Ascending aorta (tissue), 2 donors: ENCODE measurements at regions of chr7 and their contacts with region 1.

Region 1: DNA sequence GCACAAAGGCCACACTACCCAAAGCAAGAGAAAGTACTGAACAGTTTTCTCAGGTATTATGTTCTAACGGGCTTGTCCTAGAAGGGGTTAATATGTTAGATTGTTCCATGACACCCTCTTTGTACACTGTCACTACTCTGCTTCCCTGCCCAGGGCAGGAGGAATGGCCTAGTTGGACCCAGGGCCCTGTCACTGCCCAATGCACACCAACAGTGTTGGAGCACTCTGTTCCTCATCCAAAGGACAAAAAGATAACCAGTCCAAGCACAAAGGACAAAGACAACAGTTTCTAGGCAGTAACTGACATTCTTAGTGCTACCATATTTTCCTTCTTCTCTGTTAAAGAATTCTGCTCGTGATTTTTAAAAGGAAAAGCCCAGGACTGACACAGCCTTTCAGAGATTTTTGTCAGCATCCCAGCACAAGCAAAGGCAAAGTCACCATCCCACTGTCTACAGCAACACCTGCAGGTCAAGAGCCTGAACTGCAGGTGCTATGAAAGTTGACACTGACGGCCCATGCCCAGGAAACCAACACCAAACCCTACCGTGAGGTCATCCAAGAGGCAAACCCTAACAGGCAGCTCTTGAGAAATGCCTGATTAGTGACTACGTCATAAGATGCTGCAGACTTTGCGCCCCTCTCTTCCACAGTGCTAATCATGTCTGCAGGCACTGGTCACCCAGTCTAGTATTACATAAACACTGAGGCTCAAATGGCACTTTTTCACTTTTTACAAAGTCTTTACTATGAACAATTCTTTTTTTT is 13.2 kb downstream of the NUDCD3 start:
- DNase-seq: peak; percentile 17 to 83
- H3K4me3 ChIP-seq: no peak overlapping the region
- H3K27ac ChIP-seq: peak overlapping the region; percentile 31 to 40
- H3K4me1 ChIP-seq: peaks cover 0 to 8% of the 10 kb centered on the region in 2 donors
- H3K27me3 ChIP-seq: no peaks in the 10 kb centered on the region
- CTCF ChIP-seq: peak; percentile 92 to 94 (median 94)

Region 2: GRCh38 chr7:44348300-44348699 is 128.9 kb before region 1 on chr7:
- intact Hi-C with region 1: loop called (anchors 2 kb)
- DNase-seq: no peak
- H3K4me3 ChIP-seq: no peak overlapping the region
- H3K27ac ChIP-seq: no peak overlapping the region
- H3K4me1 ChIP-seq: no peaks in the 10 kb centered on the region
- H3K27me3 ChIP-seq: no peaks in the 10 kb centered on the region
- CTCF ChIP-seq: peak in 2 of 3 experiments; percentile 14 to 43

Region 3: GRCh38 chr7:44383566-44383965 is 93.7 kb before region 1 on chr7:
- intact Hi-C with region 1: loop called (anchors 5 kb)
- DNase-seq: peak; percentile 63 to 81
- H3K4me3 ChIP-seq: no peak overlapping the region
- H3K27ac ChIP-seq: peak overlapping the region; percentile 76 to 88
- H3K4me1 ChIP-seq: peaks cover 24 to 42% of the 10 kb centered on the region in 2 donors
- H3K27me3 ChIP-seq: no peaks in the 10 kb centered on the region
- CTCF ChIP-seq: no peak